B cell (primary cell): ENCODE measurements at regions of chr2 and their contacts with region 1.

Region 1: DNA sequence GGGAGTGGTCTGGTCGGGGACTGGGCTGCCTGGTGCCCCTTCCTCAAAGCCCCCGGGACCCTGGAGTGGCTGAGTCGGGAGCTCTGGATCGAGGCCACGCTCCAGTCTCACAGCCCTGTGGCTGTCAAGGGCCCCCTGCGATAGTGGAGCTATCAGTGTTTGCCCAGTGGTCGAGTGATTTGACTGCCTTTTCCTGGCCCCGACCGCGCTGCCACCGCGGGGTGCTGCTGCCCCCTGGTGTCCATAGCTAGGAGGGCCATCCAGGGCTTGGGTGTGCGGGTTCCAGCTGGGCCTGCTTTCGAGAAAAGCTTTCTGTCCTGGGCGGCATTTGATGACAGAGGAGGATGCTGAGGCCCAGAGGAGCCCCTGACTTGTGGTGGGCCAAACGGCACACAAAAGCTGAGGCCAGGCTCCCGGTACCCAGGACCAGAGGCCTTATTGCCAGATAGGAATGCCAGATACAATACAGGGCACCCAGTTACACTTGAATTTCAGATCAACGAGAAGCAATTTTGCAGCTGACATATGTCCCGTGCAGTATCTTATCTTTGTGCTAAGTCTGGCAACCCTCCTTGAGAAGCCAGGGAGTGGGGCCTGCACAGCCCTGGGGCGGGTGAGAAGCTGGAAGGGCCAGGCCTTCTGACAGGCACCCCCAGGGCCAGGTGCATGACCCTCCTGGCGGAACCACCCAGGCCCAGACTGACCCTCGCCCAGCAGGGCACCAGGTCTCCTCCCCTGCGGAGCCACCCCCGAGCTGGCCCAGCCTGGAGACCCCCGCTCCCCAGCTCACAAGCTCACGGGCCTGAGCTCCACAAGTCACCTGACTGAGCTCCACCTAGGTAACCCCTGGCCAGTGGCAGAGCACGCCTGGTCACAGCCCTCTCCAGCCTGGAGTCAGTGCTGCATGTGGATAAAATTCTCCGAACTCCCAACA is 13.0 kb downstream of the ODC1 start:
- DNase-seq: peak; percentile 88
- ATAC-seq: peak; percentile 79
- H3K4me3 ChIP-seq: no peak overlapping the region
- H3K4me3 Mint-ChIP-seq: no peak overlapping the region
- H3K27ac ChIP-seq: no peak overlapping the region
- H3K27ac Mint-ChIP-seq: peak overlapping the region; percentile 74
- H3K4me1 ChIP-seq: peaks cover 12 to 18% of the 10 kb centered on the region in 2 donors
- H3K4me1 Mint-ChIP-seq: peaks cover 19% of the 10 kb centered on the region
- H3K27me3 ChIP-seq: peaks cover 0 to 4% (median 0%) of the 10 kb centered on the region in 4 experiments
- H3K27me3 Mint-ChIP-seq: no peaks in the 10 kb centered on the region
- CTCF ChIP-seq: peak; percentile 93

Region 2: DNA sequence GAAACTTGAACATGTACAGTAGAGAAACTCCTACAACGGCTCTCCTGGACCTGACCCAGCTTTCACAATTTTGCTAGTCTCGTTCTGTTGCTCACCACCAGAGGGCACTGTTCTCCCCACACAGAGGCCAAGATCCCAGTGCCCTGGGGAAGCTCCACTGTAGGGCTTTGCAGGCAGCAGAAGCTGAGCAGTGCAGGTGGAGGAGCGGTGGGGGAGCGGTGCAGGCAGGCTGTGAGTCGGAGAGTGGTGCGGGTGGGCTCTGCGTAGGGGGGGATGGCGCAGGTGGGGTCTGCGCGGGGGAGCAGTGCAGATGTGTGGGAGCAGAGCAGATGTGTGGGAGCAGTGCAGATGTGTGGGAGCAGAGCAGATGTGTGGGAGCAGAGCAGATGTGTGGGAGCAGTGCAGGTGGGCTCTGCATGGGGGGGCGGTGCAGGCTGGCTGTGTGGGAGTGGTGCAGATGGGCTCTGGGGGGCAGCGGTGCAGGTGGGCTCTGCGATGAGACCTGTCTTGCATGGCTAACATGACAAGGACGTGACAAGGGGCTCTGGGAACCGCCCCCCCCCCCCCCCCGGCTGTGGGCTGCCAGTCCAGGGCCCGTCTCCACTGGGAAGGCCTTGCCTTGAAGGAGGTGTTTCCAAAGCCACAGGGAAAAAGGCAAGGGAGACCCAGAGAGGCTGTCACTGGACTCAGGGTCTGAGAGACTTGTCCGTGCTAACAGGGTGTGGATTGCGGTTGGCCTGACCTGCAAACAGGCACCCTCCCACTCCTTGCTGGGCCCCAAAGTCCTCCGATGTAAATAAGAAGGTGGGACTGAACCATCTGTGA is 362.3 kb before region 1 on chr2:
- CTCF ChIA-PET with region 1: interaction called, 220 read pairs
- POLR2A ChIA-PET with region 1: no interaction called
- intact Hi-C with region 1: loop called (anchors 1 kb)
- DNase-seq: peak; percentile 86
- ATAC-seq: peak; percentile 95
- H3K4me3 ChIP-seq: no peak overlapping the region
- H3K4me3 Mint-ChIP-seq: no peak overlapping the region
- H3K27ac ChIP-seq: no peak overlapping the region
- H3K27ac Mint-ChIP-seq: no peak overlapping the region
- H3K4me1 ChIP-seq: peaks cover 3 to 6% of the 10 kb centered on the region in 2 donors
- H3K4me1 Mint-ChIP-seq: peaks cover 4% of the 10 kb centered on the region
- H3K27me3 ChIP-seq: peaks cover 0 to 36% (median 22%) of the 10 kb centered on the region in 4 experiments
- H3K27me3 Mint-ChIP-seq: peaks cover 43% of the 10 kb centered on the region
- CTCF ChIP-seq: peak; percentile 81

Region 3: DNA sequence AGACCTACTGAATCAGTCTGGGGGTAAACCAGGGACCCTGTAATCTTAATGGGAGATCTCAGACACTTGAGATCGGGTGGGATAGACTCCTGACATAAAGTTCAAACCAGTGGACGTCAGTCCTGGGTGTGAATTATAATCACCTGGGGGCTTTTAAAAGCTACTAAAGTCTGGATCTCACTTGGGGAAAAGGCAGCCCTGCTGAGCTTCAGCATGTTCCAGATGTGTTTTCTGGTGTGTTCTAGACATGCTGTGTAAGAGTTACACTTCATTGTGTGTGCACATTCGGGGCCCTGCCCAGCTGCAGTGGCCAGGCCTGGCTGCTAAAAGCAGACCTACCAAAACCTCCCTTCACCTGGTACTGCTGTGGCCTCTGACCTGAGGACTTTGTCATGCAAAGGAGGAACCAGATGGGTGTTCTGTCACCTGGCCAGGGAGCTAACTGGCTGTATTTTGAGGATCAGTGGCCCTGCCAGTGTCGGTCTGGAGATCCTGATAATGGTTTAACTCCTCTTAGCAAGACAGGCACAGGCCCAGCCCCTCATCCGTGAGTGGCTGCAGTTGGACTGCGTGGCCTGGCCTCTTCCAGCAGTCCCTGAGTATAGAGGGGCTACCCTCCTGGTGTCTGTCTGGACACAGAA is 302.0 kb before region 1 on chr2:
- CTCF ChIA-PET with region 1: interaction called, 35 read pairs
- POLR2A ChIA-PET with region 1: interaction called, 3 read pairs
- intact Hi-C with region 1: no loop called
- DNase-seq: peak; percentile 3
- ATAC-seq: no peak
- H3K4me3 ChIP-seq: no peak overlapping the region
- H3K4me3 Mint-ChIP-seq: no peak overlapping the region
- H3K27ac ChIP-seq: no peak overlapping the region
- H3K27ac Mint-ChIP-seq: no peak overlapping the region
- H3K4me1 ChIP-seq: no peaks in the 10 kb centered on the region
- H3K4me1 Mint-ChIP-seq: no peaks in the 10 kb centered on the region
- H3K27me3 ChIP-seq: no peaks in the 10 kb centered on the region
- H3K27me3 Mint-ChIP-seq: no peaks in the 10 kb centered on the region
- CTCF ChIP-seq: no peak

Region 4: DNA sequence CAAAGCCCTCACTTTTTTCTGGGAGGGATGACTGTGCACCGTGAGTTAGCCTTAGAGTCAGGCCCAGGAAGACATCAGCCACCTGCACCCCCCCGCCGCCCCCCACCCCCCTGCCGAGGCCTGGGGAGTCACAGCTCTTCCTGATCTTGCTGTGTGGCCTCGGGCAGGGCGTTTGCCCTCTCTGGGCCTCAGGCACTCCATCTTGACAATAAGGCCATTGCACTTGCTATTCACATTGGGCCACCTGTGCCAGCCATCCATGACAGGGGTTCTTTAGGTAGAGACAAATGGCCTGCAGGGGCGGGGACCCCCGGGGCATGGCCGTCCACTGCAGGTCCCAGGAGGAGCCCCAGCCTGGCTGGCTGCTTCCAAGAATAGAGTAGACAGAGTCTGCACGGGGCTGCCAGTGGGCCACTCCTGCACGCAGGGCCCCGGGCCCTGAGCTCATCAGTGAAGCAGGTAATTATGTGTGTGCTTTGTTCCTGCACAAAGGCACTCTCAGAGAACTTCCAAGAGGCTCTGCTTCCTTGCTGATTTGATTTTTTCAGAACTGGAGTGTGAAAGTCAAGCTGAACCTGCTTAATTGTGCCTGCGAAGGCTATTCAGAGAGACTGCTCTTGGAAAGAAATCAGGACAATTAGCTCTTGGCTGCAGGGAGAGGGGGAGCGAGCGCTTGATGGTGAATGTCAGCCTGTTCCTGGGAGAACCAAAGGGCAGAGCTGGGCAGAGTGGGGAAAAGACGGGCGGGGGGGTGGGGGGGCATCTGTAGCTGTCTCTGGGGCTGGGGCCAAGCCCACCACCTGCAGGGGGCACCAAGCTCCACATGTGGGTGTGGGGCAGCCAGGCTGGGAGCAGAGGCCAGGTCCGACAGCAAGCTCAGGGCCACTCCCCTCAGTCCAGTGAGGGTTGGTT is 272.3 kb before region 1 on chr2:
- CTCF ChIA-PET with region 1: interaction called, 25 read pairs
- POLR2A ChIA-PET with region 1: no interaction called
- intact Hi-C with region 1: no loop called
- DNase-seq: no peak
- ATAC-seq: no peak
- H3K4me3 ChIP-seq: no peak overlapping the region
- H3K4me3 Mint-ChIP-seq: no peak overlapping the region
- H3K27ac ChIP-seq: no peak overlapping the region
- H3K27ac Mint-ChIP-seq: no peak overlapping the region
- H3K4me1 ChIP-seq: peaks cover 9 to 15% of the 10 kb centered on the region in 2 donors
- H3K4me1 Mint-ChIP-seq: peaks cover 16% of the 10 kb centered on the region
- H3K27me3 ChIP-seq: no peaks in the 10 kb centered on the region
- H3K27me3 Mint-ChIP-seq: no peaks in the 10 kb centered on the region
- CTCF ChIP-seq: no peak

Region 5: DNA sequence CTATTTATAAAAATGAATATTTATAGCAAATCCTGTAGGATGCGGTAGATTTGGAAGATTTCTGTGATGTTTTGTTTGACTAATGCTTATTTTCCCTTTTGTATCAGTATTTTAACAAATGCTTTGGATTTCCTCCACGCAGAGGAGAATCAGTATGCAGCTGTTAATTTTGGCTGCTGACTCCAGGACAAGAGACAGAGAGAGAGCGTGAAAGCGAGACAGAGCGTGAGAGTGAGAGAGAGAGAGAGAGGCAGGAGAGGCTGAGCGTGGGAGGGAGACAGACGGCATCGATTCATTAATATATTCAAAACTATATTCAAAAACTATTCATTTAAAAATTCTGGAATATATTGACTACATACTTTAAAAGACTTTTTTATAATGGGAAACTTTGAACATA is 250.1 kb before region 1 on chr2:
- CTCF ChIA-PET with region 1: no interaction called
- POLR2A ChIA-PET with region 1: no interaction called
- intact Hi-C with region 1: no loop called
- DNase-seq: no peak
- ATAC-seq: no peak
- H3K4me3 ChIP-seq: no peak overlapping the region
- H3K4me3 Mint-ChIP-seq: no peak overlapping the region
- H3K27ac ChIP-seq: no peak overlapping the region
- H3K27ac Mint-ChIP-seq: no peak overlapping the region
- H3K4me1 ChIP-seq: no peaks in the 10 kb centered on the region
- H3K4me1 Mint-ChIP-seq: peaks cover 2% of the 10 kb centered on the region
- H3K27me3 ChIP-seq: no peaks in the 10 kb centered on the region
- H3K27me3 Mint-ChIP-seq: no peaks in the 10 kb centered on the region
- CTCF ChIP-seq: no peak

Region 6: GRCh38 chr2:10302479-10303180 is 132.5 kb before region 1 on chr2 and contains the start of gene HPCAL1:
- CTCF ChIA-PET with region 1: interaction called, 33 read pairs
- POLR2A ChIA-PET with region 1: interaction called, 3 read pairs
- intact Hi-C with region 1: no loop called
- DNase-seq: peak; percentile 90
- ATAC-seq: peak; percentile 81
- H3K4me3 ChIP-seq: peak within 1 kb of the TSS; percentile 67 to 78 (median 76)
- H3K4me3 Mint-ChIP-seq: peak within 1 kb of the TSS; percentile 99
- H3K27ac ChIP-seq: peak within 1 kb of the TSS; percentile 71 to 77
- H3K27ac Mint-ChIP-seq: peak within 1 kb of the TSS; percentile 88
- H3K4me1 ChIP-seq: peaks cover 39 to 51% of the 10 kb centered on the region in 2 donors
- H3K4me1 Mint-ChIP-seq: peaks cover 60% of the 10 kb centered on the region
- H3K27me3 ChIP-seq: no peaks in the 10 kb centered on the region
- H3K27me3 Mint-ChIP-seq: no peaks in the 10 kb centered on the region
- CTCF ChIP-seq: peak; percentile 80
- total RNA-seq, gene HPCAL1: 60.3 and 64.1 TPM in 2 replicates

Region 7: DNA sequence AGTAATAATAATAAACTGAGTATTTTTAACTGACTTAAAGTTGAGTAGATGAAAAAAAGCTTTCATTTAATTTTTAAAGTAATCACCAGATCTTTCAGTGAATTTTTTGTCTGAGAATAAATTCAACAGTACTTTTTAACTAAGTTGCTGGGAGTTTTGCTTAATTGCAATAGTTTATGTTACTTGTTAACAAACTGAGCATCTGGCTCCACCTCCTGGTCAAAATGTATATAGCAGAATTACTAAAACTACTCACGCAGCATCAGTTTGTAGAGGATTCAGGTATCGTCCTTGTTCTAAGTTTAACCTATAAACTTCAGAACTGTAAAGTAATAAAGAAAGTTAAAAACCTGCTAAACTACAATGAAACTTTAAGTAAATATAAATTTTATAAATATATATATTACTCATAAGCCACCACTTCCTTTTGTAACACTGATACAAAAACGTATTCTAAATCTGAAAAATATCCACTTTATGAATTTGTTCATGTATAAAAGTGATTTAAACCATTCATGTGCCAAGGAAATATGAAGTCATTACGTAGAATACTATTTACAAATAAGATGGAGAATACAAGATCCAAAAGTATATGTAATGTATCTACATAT is 233.4 kb after region 1 on chr2:
- CTCF ChIA-PET with region 1: interaction called, 5 read pairs
- POLR2A ChIA-PET with region 1: no interaction called
- intact Hi-C with region 1: loop called (anchors 2 kb)
- DNase-seq: peak; percentile 77
- ATAC-seq: peak; percentile 56
- H3K4me3 ChIP-seq: no peak overlapping the region
- H3K4me3 Mint-ChIP-seq: no peak overlapping the region
- H3K27ac ChIP-seq: no peak overlapping the region
- H3K27ac Mint-ChIP-seq: no peak overlapping the region
- H3K4me1 ChIP-seq: no peaks in the 10 kb centered on the region
- H3K4me1 Mint-ChIP-seq: no peaks in the 10 kb centered on the region
- H3K27me3 ChIP-seq: no peaks in the 10 kb centered on the region
- H3K27me3 Mint-ChIP-seq: no peaks in the 10 kb centered on the region
- CTCF ChIP-seq: peak; percentile 97

Region 8: DNA sequence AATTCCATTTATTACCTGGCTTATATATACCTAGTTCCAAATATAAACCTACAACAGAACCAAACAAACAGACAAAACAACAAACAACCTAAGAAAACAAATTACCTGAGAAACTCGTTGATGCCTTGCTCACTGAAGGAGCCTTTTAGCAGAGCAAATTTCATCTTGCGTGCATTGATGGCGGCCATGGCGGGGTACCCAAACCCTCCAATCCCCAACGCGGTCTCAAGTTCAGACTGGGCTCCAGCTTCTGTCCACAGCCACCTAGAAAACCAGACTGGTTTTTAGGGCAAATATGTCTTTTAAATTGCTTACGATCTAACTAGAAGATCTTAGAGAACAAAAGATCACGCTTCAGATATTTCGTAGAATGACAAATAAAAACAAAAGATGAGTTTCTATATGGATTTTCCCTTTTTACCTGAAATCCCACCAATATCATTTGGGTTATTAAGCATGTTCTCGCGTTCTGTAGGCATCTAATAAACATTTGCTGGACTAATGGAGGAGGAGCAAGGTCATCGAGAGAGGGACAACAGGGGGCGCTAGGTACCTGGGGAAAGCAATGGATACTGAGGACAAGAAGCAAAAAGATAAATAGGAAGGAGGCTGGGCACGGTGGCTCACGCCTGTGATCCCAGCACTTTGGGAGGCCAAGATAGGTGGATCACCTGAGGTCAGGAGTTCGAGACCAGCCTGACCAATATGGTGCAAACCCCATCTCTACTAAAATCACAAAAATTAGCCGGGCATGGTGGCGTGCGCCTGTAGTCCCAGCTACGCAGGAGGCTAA is 352.2 kb after region 1 on chr2:
- CTCF ChIA-PET with region 1: no interaction called
- POLR2A ChIA-PET with region 1: no interaction called
- intact Hi-C with region 1: no loop called
- DNase-seq: peak; percentile 44
- ATAC-seq: no peak
- H3K4me3 ChIP-seq: no peak overlapping the region
- H3K4me3 Mint-ChIP-seq: no peak overlapping the region
- H3K27ac ChIP-seq: no peak overlapping the region
- H3K27ac Mint-ChIP-seq: no peak overlapping the region
- H3K4me1 ChIP-seq: no peaks in the 10 kb centered on the region
- H3K4me1 Mint-ChIP-seq: peaks cover 5% of the 10 kb centered on the region
- H3K27me3 ChIP-seq: no peaks in the 10 kb centered on the region
- H3K27me3 Mint-ChIP-seq: no peaks in the 10 kb centered on the region
- CTCF ChIP-seq: peak; percentile 34